IMR-90 (cell line): ENCODE measurements at regions of chr7 and their contacts with region 1.

Region 1: DNA sequence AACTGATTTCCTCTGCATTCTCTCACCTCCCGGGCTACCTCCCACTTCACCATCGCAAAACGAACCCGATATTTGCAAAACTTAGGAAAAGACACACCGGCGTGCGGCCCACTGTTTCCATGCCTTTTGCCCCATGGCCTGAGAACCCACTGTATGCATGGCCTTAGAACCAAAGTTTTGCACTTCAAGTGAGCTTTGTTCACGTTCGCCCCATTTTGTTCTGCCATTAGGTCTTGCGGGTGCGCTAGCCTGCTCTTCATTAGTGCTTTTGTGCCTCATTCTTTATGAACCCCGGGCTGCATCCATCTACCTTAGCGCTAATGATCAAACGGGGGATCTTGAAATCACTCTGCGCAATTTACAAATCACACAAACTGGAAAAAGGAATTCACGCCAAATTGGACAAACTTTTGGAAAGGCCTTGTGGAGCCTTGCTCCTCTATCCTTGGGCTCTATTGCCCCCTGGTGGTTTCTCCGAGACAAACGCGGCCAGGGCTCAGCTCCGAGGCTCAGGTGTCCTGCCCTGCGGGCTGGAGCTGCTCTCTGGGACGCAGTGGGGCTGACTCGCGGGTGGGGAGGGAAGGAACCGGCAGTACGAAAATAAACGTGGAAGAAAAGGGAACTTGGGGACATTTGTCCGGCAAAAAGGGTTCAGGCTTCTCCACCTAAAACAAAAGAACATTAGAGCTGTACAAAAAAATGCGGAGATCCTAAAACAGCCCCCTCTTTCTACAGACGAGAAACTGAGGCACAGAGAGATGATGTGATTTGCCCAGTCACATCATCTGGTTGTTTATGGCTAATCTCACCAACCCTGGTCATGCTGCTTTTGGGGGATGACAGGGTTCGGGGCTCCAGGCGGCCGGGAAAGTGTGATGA is 300.4 kb upstream of the NFE2L3 start:
- DNase-seq: peak; percentile 76
- ATAC-seq: peak; percentile 46
- H3K4me3 ChIP-seq: no peak overlapping the region
- H3K27ac ChIP-seq: peak overlapping the region; percentile 14; the same call in 1 of the 2 replicates
- H3K4me1 ChIP-seq: peaks cover 20% of the 10 kb centered on the region; the same call in 1 of the 2 replicates
- H3K27me3 ChIP-seq: peaks cover 3% of the 10 kb centered on the region; the same call in 1 of the 2 replicates
- CTCF ChIP-seq: peak; percentile 83
- POLR2A ChIP-seq: no peak
- RAD21 ChIP-seq: peak; percentile 88

Region 2: GRCh38 chr7:25259587-25260243 is 591.9 kb before region 1 on chr7:
- CTCF ChIA-PET with region 1: no interaction called
- POLR2A ChIA-PET with region 1: no interaction called
- dilution Hi-C with region 1: no loop called
- in situ Hi-C with region 1: loop called (anchors 5 kb)
- intact Hi-C with region 1: loop called (anchors 1 kb)
- DNase-seq: peak; percentile 76
- ATAC-seq: peak; percentile 93
- H3K4me3 ChIP-seq: no peak overlapping the region
- H3K27ac ChIP-seq: no peak overlapping the region
- H3K4me1 ChIP-seq: no peaks in the 10 kb centered on the region
- H3K27me3 ChIP-seq: peaks cover 3% of the 10 kb centered on the region
- CTCF ChIP-seq: peak; percentile 84
- POLR2A ChIP-seq: no peak
- RAD21 ChIP-seq: peak; percentile 81

Region 3: DNA sequence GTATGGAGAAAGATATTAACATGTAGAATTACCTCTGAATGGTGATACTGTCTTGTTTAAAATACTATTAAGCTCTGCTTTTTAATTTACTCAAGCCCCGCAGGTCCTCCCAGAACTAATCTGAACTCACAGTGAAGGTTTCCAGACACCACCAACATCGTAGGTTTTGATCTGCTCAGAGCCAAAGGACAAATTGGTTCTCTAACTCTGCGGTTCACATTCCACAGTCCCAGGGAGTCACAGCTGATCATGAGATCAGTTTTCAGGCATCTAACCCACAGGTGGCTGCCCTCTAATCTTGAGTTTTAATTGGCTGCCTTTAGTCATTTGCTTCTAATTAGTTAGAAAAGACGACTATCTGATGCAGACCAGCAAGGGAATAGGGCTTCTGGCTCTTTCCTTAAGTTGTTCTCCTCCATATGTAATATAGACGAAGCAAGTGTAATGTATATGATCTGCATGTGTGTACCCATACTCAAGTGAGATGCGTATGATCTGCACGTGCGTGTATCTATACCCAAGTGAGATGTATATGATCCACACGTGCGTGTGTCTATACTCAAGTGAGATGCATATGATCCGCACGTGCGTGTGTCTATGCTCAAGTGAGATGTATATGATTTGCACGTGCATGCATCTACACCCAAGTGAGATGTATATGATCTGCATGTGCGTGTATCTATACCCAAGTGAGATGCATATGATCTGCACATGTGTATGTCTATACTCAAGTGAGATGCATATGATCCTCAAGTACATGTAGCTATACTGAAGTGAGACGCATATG is 291.8 kb before region 1 on chr7:
- CTCF ChIA-PET with region 1: no interaction called
- POLR2A ChIA-PET with region 1: no interaction called
- dilution Hi-C with region 1: no loop called
- in situ Hi-C with region 1: loop called (anchors 5 kb)
- intact Hi-C with region 1: no loop called
- DNase-seq: no peak
- ATAC-seq: no peak
- H3K4me3 ChIP-seq: no peak overlapping the region
- H3K27ac ChIP-seq: no peak overlapping the region
- H3K4me1 ChIP-seq: no peaks in the 10 kb centered on the region
- H3K27me3 ChIP-seq: no peaks in the 10 kb centered on the region; the same call in 1 of the 2 replicates
- CTCF ChIP-seq: no peak
- POLR2A ChIP-seq: no peak
- RAD21 ChIP-seq: no peak

Region 4: DNA sequence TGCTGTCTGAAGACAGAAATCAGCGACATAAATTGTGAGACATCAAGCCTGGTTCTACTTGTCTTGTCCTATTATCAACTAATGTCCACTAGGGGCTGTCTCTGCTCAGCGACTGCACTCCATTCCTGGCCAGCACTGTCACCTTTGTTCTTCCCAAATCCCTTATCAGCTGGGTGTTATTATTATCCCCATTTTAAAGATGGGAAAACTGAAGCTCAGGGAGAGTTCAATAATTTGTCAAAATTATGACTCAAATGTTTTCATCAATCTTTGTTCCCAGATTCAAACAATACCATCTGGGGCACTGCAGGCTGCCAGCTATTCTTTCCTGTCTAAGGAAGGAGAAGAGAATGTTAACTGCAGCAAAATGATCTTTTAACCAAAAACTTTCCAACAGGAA is 131.1 kb before region 1 on chr7:
- CTCF ChIA-PET with region 1: no interaction called
- POLR2A ChIA-PET with region 1: no interaction called
- dilution Hi-C with region 1: no loop called
- in situ Hi-C with region 1: no loop called
- intact Hi-C with region 1: loop called (anchors 5 kb)
- DNase-seq: peak; percentile 2
- ATAC-seq: no peak
- H3K4me3 ChIP-seq: no peak overlapping the region
- H3K27ac ChIP-seq: no peak overlapping the region
- H3K4me1 ChIP-seq: peaks cover 3% of the 10 kb centered on the region; the same call in 1 of the 2 replicates
- H3K27me3 ChIP-seq: no peaks in the 10 kb centered on the region
- CTCF ChIP-seq: 0 out of 2 replicates have a peak, but pooled peaks have one; percentile 17
- POLR2A ChIP-seq: no peak
- RAD21 ChIP-seq: no peak

Region 5: GRCh38 chr7:26853788-26854393 is 1002.3 kb after region 1 on chr7:
- CTCF ChIA-PET with region 1: no interaction called
- POLR2A ChIA-PET with region 1: no interaction called
- dilution Hi-C with region 1: no loop called
- in situ Hi-C with region 1: loop called (anchors 10 kb)
- intact Hi-C with region 1: no loop called
- DNase-seq: peak; percentile 75
- ATAC-seq: 0 out of 2 replicates have a peak, but pooled peaks have one; percentile 51
- H3K4me3 ChIP-seq: no peak overlapping the region
- H3K27ac ChIP-seq: no peak overlapping the region
- H3K4me1 ChIP-seq: no peaks in the 10 kb centered on the region; the same call in 1 of the 2 replicates
- H3K27me3 ChIP-seq: no peaks in the 10 kb centered on the region
- CTCF ChIP-seq: peak; percentile 70
- POLR2A ChIP-seq: no peak
- RAD21 ChIP-seq: peak; percentile 70